ENCODE measurements at regions of chr9 and their contacts with region 1.

Region 1: DNA sequence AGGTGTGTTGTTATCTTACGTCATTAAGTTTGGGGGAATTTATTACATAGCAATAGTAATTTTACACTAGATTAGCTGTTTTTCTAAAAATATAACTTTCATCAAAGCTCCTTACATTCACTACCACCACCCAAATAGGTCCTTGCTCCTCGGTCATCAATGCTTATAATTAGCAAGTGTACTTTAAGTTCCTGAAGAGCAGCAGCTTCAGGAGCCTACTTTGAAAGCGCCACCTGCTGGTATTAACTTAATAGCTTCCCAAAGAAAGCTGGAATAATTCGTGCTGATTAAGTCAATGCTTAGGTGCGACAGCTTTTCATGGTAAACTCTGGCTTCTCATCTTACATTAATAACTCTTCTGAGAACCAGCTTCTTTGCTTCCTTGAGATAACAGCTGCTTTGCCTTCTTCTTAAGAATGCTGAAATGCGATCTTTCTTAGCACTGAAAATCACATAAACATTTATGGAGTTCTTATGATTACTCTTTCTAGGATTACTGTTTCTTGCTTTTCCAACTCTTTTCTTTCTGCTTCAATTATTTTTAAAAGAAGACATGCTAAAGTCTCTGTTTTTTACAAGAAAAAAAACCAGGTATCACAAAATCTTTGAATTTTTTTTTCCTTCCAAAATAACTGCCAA is 10.0 kb upstream of the C5 start:
- DNase-seq: no peak
- H3K4me3 ChIP-seq: no peak overlapping the region
- H3K27ac ChIP-seq: no peak overlapping the region
- H3K4me1 ChIP-seq: no peaks in the 10 kb centered on the region
- H3K27me3 ChIP-seq: no peaks in the 10 kb centered on the region
- CTCF ChIP-seq: peak in 2 of 3 experiments; percentile 72 to 76; a peak in 3 of 4 replicates
- EP300 ChIP-seq: no peak
- POLR2A ChIP-seq: no peak
- RAD21 ChIP-seq: peak; percentile 52 to 71

Region 2: DNA sequence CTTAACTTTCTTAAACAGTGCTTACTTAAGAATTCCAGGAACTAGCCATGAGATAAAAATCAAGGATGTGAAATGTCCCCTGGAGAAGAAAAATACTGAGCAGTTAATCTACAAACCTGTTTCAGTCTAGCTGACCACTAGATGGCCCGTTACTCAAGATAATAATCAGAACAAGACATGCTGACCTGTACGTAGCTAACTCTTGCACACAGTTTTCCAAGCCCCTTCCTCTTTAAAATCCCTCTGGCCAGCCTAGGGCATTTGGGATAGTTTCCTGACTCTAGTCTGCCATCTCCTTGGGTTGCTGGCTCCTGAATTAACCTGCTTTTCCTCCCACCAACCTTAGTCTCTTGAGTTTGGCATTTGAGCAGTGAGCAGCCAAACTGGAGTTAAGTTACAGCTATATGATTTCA is 74.3 kb before region 1 on chr9:
- CTCF ChIA-PET with region 1: interaction called, 51 read pairs
- POLR2A ChIA-PET with region 1: no interaction called
- DNase-seq: no peak
- H3K4me3 ChIP-seq: no peak overlapping the region
- H3K27ac ChIP-seq: no peak overlapping the region
- H3K4me1 ChIP-seq: no peaks in the 10 kb centered on the region
- H3K27me3 ChIP-seq: no peaks in the 10 kb centered on the region
- CTCF ChIP-seq: peak in 2 of 3 experiments; percentile 64 to 66; a peak in 3 of 4 replicates
- EP300 ChIP-seq: no peak
- POLR2A ChIP-seq: no peak
- RAD21 ChIP-seq: peak; percentile 70 to 78

Region 3: DNA sequence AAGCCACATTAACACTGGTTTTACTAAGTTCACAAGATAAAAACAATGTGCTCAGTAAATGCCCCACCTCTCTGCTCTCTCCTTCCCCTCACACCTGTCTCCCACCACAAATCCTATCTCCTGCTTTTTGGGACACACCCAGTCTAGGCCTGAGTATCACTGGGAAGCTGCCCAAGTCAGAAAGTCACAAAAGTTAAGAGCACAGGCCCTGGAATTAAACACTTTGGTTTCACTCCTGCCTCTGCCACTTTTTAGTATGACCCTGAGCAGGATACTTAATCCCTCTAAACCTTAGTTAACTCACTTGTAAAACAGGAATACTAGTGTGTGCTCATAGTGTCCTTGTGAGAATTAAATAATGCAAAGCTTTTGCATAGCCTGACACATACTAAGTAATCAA is 21.3 kb before region 1 on chr9:
- CTCF ChIA-PET with region 1: interaction called, 71 read pairs
- POLR2A ChIA-PET with region 1: no interaction called
- DNase-seq: no peak
- H3K4me3 ChIP-seq: no peak overlapping the region
- H3K27ac ChIP-seq: no peak overlapping the region
- H3K4me1 ChIP-seq: no peaks in the 10 kb centered on the region
- H3K27me3 ChIP-seq: no peaks in the 10 kb centered on the region
- CTCF ChIP-seq: no peak
- EP300 ChIP-seq: no peak
- POLR2A ChIP-seq: no peak
- RAD21 ChIP-seq: no peak

Region 4: DNA sequence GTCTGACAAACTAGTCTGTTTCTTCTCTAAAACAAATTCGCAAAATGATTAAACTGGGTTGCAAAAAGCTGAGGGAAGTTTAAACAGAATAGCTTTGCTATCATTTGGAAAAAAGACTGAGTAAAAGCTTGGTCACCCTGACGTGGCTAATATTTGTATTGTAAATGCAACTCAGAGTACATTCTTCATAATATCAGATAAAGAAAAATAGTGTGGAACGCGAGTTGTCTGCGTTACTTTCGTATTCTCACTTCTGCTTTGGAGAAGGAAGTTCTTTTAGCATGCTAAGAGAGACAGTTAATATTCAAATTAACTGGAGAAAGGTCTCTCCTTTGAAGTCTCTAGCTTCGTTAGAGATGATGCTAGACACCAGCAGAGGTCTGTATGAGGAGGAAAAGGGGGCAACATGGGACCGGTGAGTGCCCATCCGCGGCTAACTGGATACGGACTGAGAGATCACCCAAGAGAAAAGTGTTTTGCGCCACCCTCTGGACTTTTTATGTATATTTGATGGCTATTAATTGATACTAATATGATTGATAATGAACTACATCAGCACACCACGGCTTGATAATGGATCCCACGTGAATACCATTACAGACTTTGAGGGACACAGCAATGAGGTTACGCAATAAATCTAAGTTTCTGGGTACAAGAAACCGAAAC is 11.8 kb after region 1 on chr9:
- CTCF ChIA-PET with region 1: interaction called, 24 read pairs
- POLR2A ChIA-PET with region 1: no interaction called
- DNase-seq: no peak
- H3K4me3 ChIP-seq: peak overlapping the region in 1 of 4 experiments; percentile 9; a peak in 1 of 8 replicates
- H3K27ac ChIP-seq: no peak overlapping the region
- H3K4me1 ChIP-seq: peaks cover 0 to 3% (median 0%) of the 10 kb centered on the region in 4 experiments; a peak in 2 of 7 replicates
- H3K27me3 ChIP-seq: peaks cover 6 to 40% (median 28%) of the 10 kb centered on the region in 4 experiments
- CTCF ChIP-seq: no peak
- EP300 ChIP-seq: no peak
- POLR2A ChIP-seq: no peak
- RAD21 ChIP-seq: no peak